ENCODE measurements at regions of chr7 and their contacts with region 1.

Region 1: DNA sequence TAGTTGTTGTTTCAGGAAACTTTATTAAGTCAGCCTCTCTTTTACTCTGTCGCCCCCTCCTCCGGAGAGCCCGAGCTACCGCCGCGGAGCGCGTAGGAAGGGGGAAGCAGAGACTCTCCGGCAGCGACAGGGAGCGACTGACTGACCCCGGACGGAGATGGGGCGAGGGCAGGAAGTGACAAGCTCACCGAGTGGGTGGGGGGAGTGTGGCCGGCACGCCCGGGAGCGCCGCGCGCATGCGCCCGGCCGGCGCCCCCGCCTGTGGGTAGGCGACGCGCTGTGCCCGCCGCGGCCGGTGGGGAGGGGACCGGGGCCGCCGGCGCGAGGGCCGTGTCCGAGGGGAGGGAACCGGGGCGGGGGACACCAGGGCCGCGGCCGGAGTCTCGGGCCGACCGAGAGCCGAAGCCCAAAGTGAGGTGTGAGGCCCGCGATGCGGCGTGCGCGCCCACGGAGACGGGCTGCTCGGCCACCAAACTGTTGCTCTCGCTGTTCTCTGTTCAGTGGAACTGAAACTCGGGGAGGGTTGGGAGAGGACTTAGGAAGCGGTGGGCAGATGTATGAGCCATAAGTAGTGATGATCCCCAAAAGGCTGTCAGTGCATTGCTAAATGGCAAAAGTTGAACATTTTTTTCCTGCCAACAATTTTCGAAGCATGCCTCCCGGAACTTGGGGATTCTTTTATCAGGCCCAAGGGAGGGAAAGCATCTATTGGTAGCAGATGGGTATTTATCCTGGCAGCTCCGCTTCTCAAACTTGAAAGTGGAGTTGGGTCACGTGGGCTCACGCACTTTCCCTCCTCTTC is at the start of gene ZNF800:
- DNase-seq: peak; percentile 72 to 95 (median 85)
- ATAC-seq: peak; percentile 72
- H3K4me3 ChIP-seq: peak within 1 kb of the TSS; percentile 92
- H3K4me3 Mint-ChIP-seq: peak within 1 kb of the TSS; percentile 99
- H3K27ac ChIP-seq: peak within 1 kb of the TSS; percentile 95
- H3K27ac Mint-ChIP-seq: peak within 1 kb of the TSS; percentile 94
- H3K4me1 ChIP-seq: peaks cover 16% of the 10 kb centered on the region
- H3K4me1 Mint-ChIP-seq: peaks cover 65% of the 10 kb centered on the region
- H3K27me3 ChIP-seq: no peaks in the 10 kb centered on the region
- H3K27me3 Mint-ChIP-seq: no peaks in the 10 kb centered on the region
- CTCF ChIP-seq: no peak
- total RNA-seq, gene ZNF800: 73.9 to 78.9 TPM

Region 2: GRCh38 chr7:127365164-127365956 is 27.4 kb before region 1 on chr7:
- CTCF ChIA-PET with region 1: no interaction called
- POLR2A ChIA-PET with region 1: interaction called, 33 read pairs
- intact Hi-C with region 1: no loop called
- DNase-seq: no peak
- ATAC-seq: no peak
- H3K4me3 ChIP-seq: no peak overlapping the region
- H3K4me3 Mint-ChIP-seq: no peak overlapping the region
- H3K27ac ChIP-seq: no peak overlapping the region
- H3K27ac Mint-ChIP-seq: peak overlapping the region; percentile 28
- H3K4me1 ChIP-seq: no peaks in the 10 kb centered on the region
- H3K4me1 Mint-ChIP-seq: peaks cover 43% of the 10 kb centered on the region
- H3K27me3 ChIP-seq: no peaks in the 10 kb centered on the region
- H3K27me3 Mint-ChIP-seq: no peaks in the 10 kb centered on the region
- CTCF ChIP-seq: no peak

Region 3: DNA sequence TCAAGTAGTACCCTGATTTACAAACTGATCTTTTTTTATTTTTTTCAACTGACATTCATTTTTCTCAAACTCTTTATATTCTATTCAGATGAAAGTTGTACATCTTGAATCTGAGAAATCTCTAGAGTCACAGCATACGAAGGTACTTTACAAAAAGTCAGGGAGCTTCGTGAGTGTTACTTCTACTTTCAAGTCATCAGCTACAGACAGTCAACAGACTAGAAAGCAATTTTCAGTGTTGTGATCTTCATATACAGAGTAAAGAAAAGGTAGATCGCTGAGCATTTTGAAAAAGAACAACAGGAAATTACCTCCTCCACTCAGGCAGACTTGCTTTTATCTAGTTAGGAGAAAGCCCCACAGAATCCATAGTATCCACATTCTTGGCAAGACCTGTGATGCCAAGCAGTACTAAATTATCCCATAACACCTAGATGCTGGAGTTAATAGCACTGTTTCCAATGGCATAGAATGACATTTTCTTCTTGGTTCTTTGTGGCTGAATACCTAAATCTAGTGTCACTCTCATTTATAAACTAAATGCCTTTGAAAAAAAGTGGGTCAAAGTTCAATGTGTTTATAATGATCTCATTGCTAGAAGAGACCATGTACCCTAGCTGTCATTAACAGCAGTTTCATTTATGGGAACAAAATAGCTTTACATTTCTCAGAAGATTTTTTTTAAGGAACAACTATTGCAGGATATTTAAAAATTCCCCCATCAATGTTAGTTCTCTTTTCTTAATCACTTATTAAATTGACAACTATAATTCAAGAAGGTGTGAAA is 11.7 kb after region 1 on chr7:
- CTCF ChIA-PET with region 1: interaction called, 4 read pairs
- POLR2A ChIA-PET with region 1: interaction called, 94 read pairs
- intact Hi-C with region 1: no loop called
- DNase-seq: peak in 3 of 14 experiments; percentile 23 to 33 (median 31)
- ATAC-seq: peak; percentile 80
- H3K4me3 ChIP-seq: no peak overlapping the region
- H3K4me3 Mint-ChIP-seq: peak overlapping the region; percentile 8
- H3K27ac ChIP-seq: peak overlapping the region; percentile 13 to 14
- H3K27ac Mint-ChIP-seq: peak overlapping the region; percentile 75
- H3K4me1 ChIP-seq: no peaks in the 10 kb centered on the region
- H3K4me1 Mint-ChIP-seq: peaks cover 36% of the 10 kb centered on the region
- H3K27me3 ChIP-seq: no peaks in the 10 kb centered on the region
- H3K27me3 Mint-ChIP-seq: no peaks in the 10 kb centered on the region
- CTCF ChIP-seq: no peak

Region 4: DNA sequence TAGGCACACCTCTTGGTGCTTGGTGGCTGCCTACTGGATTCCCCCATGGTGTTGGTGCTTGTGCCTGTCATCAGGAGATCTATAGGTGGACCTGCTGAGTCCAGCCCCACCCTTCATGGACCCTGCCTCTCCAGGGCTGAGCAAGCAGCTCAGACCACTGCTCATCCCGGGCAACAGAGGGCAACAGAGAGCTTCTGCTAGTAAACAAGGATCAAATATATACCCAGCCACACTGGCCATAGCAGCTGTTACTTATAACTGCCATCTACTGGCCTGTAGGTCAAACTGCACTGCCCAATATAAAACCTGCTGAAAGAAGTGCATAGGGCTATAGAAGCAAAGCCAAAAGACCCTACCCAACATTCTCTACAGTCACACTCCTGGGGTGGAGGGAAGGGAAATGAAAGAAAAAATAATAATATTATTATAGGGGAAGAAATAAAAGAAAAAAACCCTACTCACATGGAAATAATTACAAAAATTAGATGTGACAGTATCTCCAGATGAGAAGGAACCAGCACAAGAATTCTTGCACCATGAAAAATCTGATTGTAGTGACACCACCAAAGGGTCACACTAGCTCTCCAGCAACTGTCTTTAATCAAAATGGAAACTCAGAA is 54.7 kb after region 1 on chr7:
- CTCF ChIA-PET with region 1: interaction called, 8 read pairs
- POLR2A ChIA-PET with region 1: interaction called, 33 read pairs
- intact Hi-C with region 1: loop called (anchors 1 to 10 kb)
- DNase-seq: peak; percentile 17 to 83 (median 34)
- ATAC-seq: peak; percentile 90
- H3K4me3 ChIP-seq: no peak overlapping the region
- H3K4me3 Mint-ChIP-seq: no peak overlapping the region
- H3K27ac ChIP-seq: no peak overlapping the region
- H3K27ac Mint-ChIP-seq: no peak overlapping the region
- H3K4me1 ChIP-seq: peaks cover 12% of the 10 kb centered on the region
- H3K4me1 Mint-ChIP-seq: peaks cover 33% of the 10 kb centered on the region
- H3K27me3 ChIP-seq: peaks cover 0 to 4% of the 10 kb centered on the region in 2 experiments
- H3K27me3 Mint-ChIP-seq: peaks cover 16% of the 10 kb centered on the region
- CTCF ChIP-seq: peak; percentile 74

Region 5: DNA sequence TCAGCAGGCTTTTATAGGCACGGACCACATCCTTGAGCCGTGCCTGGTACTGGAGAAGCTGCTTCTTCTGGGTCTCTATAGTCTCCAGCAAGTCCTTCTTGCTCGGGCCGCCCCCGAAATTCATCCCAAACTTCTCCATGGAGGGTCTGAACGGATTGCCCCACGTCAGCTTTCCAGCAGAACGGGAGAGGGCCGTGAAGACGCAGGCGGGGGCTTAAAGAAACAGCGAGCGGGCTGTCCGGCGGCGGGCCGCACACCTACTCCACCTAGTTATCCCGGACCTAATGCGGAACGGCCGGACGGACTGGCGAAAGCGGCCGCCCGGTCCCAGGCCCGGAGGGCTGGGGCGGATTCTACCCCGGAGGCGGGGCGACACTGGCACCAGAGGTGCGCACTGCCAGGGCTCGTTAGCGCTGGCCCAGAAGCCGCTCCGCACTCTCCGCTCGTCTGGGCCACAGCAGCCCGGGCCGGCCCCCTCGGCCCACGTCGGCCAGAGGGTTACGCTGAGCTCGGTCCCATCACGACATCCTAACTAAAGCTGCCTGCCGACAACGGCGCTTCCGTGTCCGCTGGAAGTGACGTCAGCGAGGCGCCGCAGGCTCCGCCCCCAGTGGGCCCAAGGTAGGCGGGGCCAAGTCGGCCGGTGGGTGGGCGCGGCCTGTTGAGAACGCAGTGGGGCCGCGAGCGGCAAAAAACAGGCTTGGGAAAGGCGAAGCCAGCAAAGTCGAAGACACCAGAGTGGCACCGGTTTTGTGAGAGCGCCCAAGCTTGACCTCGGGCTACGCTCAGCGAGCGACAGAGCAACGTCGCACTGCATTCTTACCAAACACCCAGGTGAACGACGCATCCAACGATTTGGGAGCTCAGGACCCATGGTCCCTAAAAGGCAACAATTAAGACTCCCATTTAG is 192.5 kb after region 1 on chr7 and contains the start of gene GCC1:
- CTCF ChIA-PET with region 1: no interaction called
- POLR2A ChIA-PET with region 1: interaction called, 25 read pairs
- intact Hi-C with region 1: loop called in 1 of 2 experiments (anchors 10 kb)
- DNase-seq: peak; percentile 87 to 97 (median 93)
- ATAC-seq: peak; percentile 80
- H3K4me3 ChIP-seq: peak within 1 kb of the TSS; percentile 90
- H3K4me3 Mint-ChIP-seq: peak within 1 kb of the TSS; percentile 96
- H3K27ac ChIP-seq: peak within 1 kb of the TSS; percentile 71 to 72
- H3K27ac Mint-ChIP-seq: peak within 1 kb of the TSS; percentile 92
- H3K4me1 ChIP-seq: peaks cover 73% of the 10 kb centered on the region
- H3K4me1 Mint-ChIP-seq: peaks cover 88% of the 10 kb centered on the region
- H3K27me3 ChIP-seq: no peaks in the 10 kb centered on the region
- H3K27me3 Mint-ChIP-seq: no peaks in the 10 kb centered on the region
- CTCF ChIP-seq: no peak
- total RNA-seq, gene GCC1: 29.8 to 30.6 TPM

Region 6: DNA sequence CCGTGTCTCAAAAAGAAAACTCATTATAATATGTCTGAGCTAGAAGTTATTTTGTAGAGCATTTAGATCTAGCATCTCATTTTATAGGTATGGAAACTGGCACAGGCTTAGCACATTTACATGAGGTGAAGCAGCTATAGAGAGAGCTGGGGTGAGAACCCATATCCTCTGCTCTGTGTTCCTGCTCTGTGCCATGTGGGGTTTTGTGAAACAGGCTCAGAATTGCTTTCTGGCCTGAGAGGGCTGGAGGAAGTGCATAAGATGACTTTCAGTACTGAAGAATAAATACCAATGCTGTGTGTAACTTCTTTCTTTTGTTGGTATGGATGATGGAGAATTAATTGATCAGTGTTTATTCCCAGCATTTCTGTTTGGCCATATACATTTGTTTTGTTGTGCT is 479.4 kb after region 1 on chr7:
- CTCF ChIA-PET with region 1: no interaction called
- POLR2A ChIA-PET with region 1: no interaction called
- intact Hi-C with region 1: no loop called
- DNase-seq: no peak
- ATAC-seq: no peak
- H3K4me3 ChIP-seq: no peak overlapping the region
- H3K4me3 Mint-ChIP-seq: no peak overlapping the region
- H3K27ac ChIP-seq: no peak overlapping the region
- H3K27ac Mint-ChIP-seq: no peak overlapping the region
- H3K4me1 ChIP-seq: peaks cover 6% of the 10 kb centered on the region
- H3K4me1 Mint-ChIP-seq: peaks cover 28% of the 10 kb centered on the region
- H3K27me3 ChIP-seq: no peaks in the 10 kb centered on the region
- H3K27me3 Mint-ChIP-seq: no peaks in the 10 kb centered on the region
- CTCF ChIP-seq: no peak

Region 7: DNA sequence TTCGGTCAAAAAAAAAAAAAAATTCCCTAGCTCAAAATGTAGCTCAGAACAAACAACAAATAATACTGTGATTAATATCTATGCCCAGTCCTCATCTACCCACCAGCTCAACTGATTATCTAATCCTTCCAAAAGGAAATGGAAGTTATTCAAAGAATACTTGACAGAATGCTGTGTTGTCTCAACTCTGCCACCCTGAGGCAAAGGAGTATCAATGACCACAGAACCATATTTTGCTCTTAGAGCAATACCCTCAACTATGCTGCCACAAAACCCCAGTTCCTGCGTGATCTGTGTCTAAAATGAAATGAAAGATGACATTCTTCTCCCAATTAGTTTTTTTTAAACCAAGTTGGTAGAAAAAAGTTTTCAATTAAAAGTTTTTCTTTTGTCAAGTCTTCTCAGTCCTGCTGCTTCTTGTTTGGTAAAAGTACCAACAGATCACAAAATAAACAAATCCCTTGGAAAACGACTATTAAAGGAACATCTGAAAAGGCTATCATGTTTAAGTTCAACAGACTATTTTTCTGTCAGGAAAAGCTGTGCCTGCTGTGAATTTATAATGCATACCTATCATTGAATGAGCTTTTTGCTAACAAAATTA is 929.4 kb after region 1 on chr7:
- CTCF ChIA-PET with region 1: no interaction called
- POLR2A ChIA-PET with region 1: no interaction called
- intact Hi-C with region 1: loop called in 1 of 2 experiments (anchors 10 kb)
- DNase-seq: peak in 4 of 14 experiments; percentile 12 to 62 (median 52)
- ATAC-seq: peak; percentile 65
- H3K4me3 ChIP-seq: no peak overlapping the region
- H3K4me3 Mint-ChIP-seq: no peak overlapping the region
- H3K27ac ChIP-seq: no peak overlapping the region
- H3K27ac Mint-ChIP-seq: peak overlapping the region; percentile 2
- H3K4me1 ChIP-seq: peaks cover 19% of the 10 kb centered on the region
- H3K4me1 Mint-ChIP-seq: peaks cover 21% of the 10 kb centered on the region
- H3K27me3 ChIP-seq: no peaks in the 10 kb centered on the region
- H3K27me3 Mint-ChIP-seq: no peaks in the 10 kb centered on the region
- CTCF ChIP-seq: peak; percentile 34